ENCODE measurements at regions of chr13 and their contacts with region 1.

Region 1: GRCh38 chr13:76886292-76887075 is at the start of gene KCTD12:
- DNase-seq: peak; percentile 91
- H3K4me3 ChIP-seq: peak within 1 kb of the TSS; percentile 91 to 98 (median 95)
- H3K27ac ChIP-seq: peak within 1 kb of the TSS; percentile 84
- H3K4me1 ChIP-seq: peaks cover 21% of the 10 kb centered on the region
- H3K27me3 ChIP-seq: no peaks in the 10 kb centered on the region
- CTCF ChIP-seq: peak; percentile 23 to 45
- POLR2A ChIP-seq: peak; percentile 98
- total RNA-seq, gene KCTD12: 90.8 and 116 TPM in 2 replicates

Region 2: DNA sequence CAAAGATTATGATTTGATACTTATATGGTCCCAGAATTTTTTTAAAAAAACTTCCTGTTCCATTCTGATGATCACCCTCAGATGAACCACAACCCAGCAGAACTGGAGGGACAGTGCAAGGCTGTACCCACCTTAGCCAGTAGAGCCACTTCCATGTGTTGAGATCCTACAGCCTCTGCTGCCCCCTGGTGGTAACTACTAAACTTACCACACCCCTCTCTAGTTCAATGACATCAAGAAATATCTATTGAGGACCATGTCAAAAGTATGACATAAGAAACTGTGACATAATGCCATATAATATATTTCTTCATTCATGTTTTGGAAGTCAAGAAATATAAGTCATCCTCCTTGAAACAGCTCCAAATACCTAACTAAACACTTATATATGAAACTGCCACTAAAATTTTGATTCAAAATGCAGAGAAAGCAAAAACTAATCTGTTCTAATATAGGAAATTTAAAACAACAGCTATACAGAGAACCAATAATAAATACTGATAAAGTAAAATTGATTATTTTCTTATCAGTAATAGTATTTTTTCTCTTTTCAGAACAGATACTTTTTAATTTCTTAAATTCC is 412.8 kb before region 1 on chr13:
- CTCF ChIA-PET with region 1: interaction called, 7 read pairs
- POLR2A ChIA-PET with region 1: no interaction called
- dilution Hi-C with region 1: no loop called
- intact Hi-C with region 1: loop called (anchors 5 kb)
- DNase-seq: peak; percentile 85
- H3K4me3 ChIP-seq: no peak overlapping the region
- H3K27ac ChIP-seq: no peak overlapping the region
- H3K4me1 ChIP-seq: no peaks in the 10 kb centered on the region
- H3K27me3 ChIP-seq: peaks cover 2% of the 10 kb centered on the region in 2 experiments
- CTCF ChIP-seq: peak; percentile 67 to 68
- POLR2A ChIP-seq: no peak

Region 3: DNA sequence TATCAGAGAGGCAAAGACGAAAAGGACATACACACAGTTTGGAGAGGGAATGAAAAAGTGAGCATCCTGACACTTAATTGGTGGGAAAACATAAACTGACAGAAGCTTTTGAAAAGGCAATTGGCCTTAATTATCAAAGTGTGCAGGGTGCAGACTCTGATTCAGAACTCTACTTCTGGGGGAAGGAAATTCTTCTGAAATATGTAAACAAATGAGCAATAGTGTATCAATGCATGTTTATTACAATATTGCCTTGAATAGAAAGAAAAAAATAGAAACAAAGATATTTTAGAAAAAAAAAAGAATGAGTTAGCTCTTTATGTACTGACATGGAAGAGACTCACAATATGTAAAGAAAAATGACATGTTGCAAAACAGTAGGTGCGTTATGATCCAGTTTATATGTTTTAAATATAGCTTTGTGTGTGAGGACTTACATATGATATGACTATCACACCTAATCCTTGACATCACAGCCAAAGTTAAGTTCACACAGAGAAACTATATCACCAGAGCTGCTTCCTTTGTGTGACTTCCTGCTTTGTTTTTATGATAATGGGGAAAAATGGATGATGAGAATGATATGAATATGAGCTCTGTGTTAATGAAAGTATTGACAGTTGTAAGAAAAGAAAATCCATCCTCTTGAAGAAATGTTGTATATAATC is 182.7 kb before region 1 on chr13:
- CTCF ChIA-PET with region 1: interaction called, 11 read pairs
- POLR2A ChIA-PET with region 1: no interaction called
- dilution Hi-C with region 1: no loop called
- intact Hi-C with region 1: no loop called
- DNase-seq: peak; percentile 51
- H3K4me3 ChIP-seq: no peak overlapping the region
- H3K27ac ChIP-seq: peak overlapping the region; percentile 5
- H3K4me1 ChIP-seq: peaks cover 23% of the 10 kb centered on the region
- H3K27me3 ChIP-seq: no peaks in the 10 kb centered on the region
- CTCF ChIP-seq: no peak
- POLR2A ChIP-seq: no peak

Region 4: DNA sequence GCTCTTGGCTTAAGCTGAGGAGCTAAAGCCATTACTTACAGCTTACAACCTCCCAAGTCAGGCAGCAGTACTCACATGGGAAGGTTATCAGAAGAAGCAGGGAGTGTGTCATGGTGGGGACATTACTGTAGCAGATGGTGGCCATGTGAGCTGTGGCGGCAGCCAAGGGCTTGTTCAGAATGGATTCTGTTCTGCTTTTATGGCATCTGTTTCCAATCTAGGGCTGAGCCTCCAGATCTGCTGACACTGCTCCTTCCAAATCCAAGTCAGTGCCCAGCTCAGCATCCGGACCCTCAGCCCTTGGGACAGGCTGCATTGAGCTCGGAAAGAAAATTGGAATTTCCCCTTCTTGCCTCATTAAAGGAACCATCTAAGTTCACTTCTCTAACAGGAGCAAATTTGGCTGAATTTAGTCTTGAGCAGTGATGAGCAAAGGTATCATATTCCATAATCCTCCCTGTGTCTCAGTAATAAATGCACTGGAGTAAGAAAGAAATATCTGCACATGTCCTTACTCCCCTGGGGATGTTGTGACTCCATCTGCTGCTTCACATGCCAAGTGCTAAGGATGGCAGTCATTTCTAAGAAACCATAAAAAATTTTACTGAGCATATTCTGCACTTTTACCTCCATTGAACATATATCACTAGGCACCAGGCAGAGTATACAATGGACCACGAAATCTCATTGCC is 74.1 kb before region 1 on chr13:
- CTCF ChIA-PET with region 1: interaction called, 10 read pairs
- POLR2A ChIA-PET with region 1: no interaction called
- dilution Hi-C with region 1: no loop called
- intact Hi-C with region 1: no loop called
- DNase-seq: no peak
- H3K4me3 ChIP-seq: no peak overlapping the region
- H3K27ac ChIP-seq: no peak overlapping the region
- H3K4me1 ChIP-seq: peaks cover 9% of the 10 kb centered on the region
- H3K27me3 ChIP-seq: no peaks in the 10 kb centered on the region
- CTCF ChIP-seq: no peak
- POLR2A ChIP-seq: no peak

Region 5: DNA sequence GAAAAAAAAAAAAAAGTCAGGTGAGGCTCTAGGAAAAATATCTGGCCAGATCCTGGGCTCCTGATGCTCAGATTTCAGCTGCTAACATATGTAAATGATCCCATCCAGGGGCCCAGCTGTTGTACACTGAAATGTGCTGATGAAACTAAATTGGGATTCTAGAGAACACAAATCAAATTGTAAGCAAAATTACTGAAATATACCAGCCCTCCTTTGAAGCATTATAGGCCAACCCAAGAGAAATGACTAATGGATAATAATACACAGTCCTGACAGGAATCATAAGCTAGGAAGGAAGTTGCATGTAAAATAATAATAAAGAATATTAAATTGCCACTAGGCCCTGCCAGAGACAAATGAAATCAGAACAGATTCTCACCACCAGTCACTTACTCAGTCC is 18.1 kb before region 1 on chr13:
- CTCF ChIA-PET with region 1: interaction called, 15 read pairs
- POLR2A ChIA-PET with region 1: interaction called, 5 read pairs
- dilution Hi-C with region 1: no loop called
- intact Hi-C with region 1: no loop called
- DNase-seq: peak; percentile 69
- H3K4me3 ChIP-seq: no peak overlapping the region
- H3K27ac ChIP-seq: no peak overlapping the region
- H3K4me1 ChIP-seq: peaks cover 49% of the 10 kb centered on the region
- H3K27me3 ChIP-seq: no peaks in the 10 kb centered on the region
- CTCF ChIP-seq: no peak
- POLR2A ChIP-seq: no peak